GM10248 (cell line): ENCODE measurements at regions of chr10 and their contacts with region 1.

Region 1: DNA sequence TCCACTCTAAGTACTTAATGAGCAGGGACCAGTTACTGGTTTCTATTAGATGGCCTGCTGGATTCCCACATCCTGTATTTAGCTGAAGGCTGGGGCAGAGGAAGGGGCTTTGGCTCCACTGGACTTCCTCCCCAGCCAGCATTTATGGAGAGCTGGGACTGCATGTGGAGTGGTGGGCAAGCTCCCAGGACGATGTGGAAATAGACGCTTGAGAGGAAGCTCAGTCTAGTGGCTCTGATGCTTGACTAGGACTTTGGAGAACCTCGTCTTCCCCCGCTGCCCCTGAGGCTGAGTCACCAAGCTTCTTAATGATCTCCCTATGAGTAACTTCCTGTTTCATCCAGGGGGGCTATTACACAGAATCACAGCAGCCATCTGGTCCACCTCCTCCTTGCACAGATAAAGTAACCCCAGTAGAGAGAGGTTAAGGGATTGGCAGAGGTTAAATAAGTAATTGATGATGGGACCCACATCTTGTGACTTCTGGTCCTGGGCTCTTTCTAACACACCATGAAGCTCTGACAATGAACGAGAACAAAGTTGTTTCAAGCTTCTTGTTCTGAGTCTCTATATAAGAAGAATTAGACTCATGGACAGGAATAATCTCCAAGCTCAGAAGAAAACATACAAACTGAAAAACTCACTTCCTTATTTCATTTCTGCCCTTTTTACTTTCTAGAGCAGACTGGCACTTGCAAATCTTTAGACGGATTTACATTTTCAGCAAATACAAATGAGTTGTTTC is 126.2 kb downstream of the PRPF18 start:
- DNase-seq: peak; percentile 74
- CTCF ChIP-seq: no peak

Region 2: GRCh38 chr10:13724484-13724883 is 11.5 kb after region 1 on chr10:
- CTCF ChIA-PET with region 1: interaction called, 21 read pairs
- POLR2A ChIA-PET with region 1: no interaction called
- DNase-seq: no peak
- CTCF ChIP-seq: no peak